Caco-2 (cell line): ENCODE measurements at regions of chr2 and their contacts with region 1.

Region 1: GRCh38 chr2:70656421-70657010 is 102.9 kb upstream of the TGFA start:
- DNase-seq: no peak
- H3K4me3 ChIP-seq: no peak overlapping the region
- H3K4me3 Mint-ChIP-seq: no peak overlapping the region
- H3K27ac Mint-ChIP-seq: no peak overlapping the region
- H3K4me1 ChIP-seq: no peaks in the 10 kb centered on the region
- H3K4me1 Mint-ChIP-seq: no peaks in the 10 kb centered on the region
- H3K27me3 ChIP-seq: peaks cover 1% of the 10 kb centered on the region; the same call in 1 of the 2 replicates
- H3K27me3 Mint-ChIP-seq: peaks cover 17% of the 10 kb centered on the region
- CTCF ChIP-seq: no peak

Region 2: DNA sequence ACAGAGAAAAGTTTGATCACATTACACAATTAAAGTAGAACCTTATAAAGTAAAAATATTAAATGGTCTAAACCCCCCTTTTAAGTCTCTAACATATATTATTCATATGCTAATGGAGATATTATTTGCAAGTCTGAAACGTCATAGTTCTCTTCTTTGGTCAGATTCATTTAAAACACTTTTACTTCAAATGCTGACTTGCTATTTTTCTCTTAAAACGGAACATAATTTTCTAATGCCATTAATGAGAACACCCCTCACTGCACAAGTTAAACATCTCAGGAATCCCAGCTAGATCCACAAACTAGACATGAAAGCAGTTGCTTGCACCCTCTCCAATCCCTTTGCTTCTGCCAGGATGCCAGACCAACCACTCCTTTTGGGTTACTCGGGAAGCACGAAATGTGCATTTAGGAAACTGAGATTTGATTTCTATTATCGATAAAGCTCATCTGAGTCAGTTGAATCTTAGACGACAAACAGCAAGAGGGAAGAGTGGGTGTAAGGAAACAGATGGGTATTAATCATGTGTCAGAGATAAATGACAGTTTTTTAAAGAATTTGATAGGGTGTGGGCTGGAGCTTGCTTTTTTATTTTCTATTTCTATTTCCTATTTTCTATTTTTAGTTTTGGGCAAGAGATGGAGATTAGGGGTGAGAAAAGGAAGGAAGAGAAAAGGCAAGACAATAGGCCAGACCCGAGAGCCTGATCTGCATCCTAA is 110.0 kb after region 1 on chr2:
- CTCF ChIA-PET with region 1: no interaction called
- POLR2A ChIA-PET with region 1: no interaction called
- intact Hi-C with region 1: no loop called
- DNase-seq: no peak
- H3K4me3 ChIP-seq: no peak overlapping the region
- H3K4me3 Mint-ChIP-seq: peak overlapping the region; percentile 66
- H3K27ac Mint-ChIP-seq: no peak overlapping the region
- H3K4me1 ChIP-seq: peaks cover 5% of the 10 kb centered on the region
- H3K4me1 Mint-ChIP-seq: peaks cover 7% of the 10 kb centered on the region
- H3K27me3 ChIP-seq: peaks cover 4% of the 10 kb centered on the region
- H3K27me3 Mint-ChIP-seq: peaks cover 36% of the 10 kb centered on the region
- CTCF ChIP-seq: no peak

Region 3: DNA sequence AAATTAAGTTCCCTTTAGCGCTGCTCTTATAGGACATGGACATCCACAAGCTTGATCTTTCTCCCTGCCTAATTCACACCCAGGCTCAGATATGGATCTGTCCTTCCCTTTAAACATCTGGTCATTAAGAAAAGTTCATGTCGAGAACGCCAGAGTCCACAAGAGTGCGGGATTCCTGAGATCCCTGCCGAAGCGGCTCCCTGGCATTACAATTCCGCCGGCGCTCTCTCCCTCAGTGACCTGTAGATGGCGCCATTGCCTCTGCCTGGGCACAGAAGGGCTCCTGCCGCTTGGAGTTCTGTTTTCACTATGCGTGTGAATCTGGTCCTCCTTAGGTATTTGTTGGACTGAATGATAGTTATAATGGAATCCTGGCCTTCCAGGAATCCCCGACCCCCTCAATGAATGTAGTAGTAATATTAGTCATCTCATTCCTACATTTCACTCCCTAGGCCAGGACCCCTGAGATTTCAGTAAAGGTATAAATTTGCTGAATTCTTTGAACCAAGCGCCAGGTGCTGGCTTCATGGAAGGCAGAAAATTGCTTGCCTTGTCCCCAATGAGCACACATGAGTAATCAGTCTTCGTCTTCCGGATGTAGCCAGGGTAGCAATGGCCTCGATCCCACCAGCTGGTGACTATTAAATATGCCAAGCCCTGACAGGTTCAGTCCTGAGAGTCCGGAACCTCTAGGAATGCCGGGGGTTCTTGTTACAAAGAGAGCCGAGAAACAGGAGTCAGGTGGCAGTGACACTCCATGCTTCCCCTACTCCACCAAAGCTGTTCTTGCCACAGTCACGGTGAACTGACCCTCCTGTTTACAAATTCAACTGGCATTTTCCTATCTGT is 205.5 kb after region 1 on chr2:
- CTCF ChIA-PET with region 1: no interaction called
- POLR2A ChIA-PET with region 1: no interaction called
- intact Hi-C with region 1: loop called (anchors 10 kb)
- DNase-seq: peak; percentile 82 to 92
- H3K4me3 ChIP-seq: no peak overlapping the region
- H3K4me3 Mint-ChIP-seq: no peak overlapping the region
- H3K27ac Mint-ChIP-seq: no peak overlapping the region
- H3K4me1 ChIP-seq: no peaks in the 10 kb centered on the region
- H3K4me1 Mint-ChIP-seq: peaks cover 6% of the 10 kb centered on the region
- H3K27me3 ChIP-seq: no peaks in the 10 kb centered on the region; the same call in none of the 2 replicates
- H3K27me3 Mint-ChIP-seq: peaks cover 29% of the 10 kb centered on the region
- CTCF ChIP-seq: peak; percentile 96 to 98